Posterior cingulate gyrus (tissue), 11 donors: ENCODE measurements at regions of chr9 and their contacts with region 1.

Region 1: GRCh38 chr9:96327694-96328352 is 25.8 kb upstream of the HSD17B3 start:
- DNase-seq: peak in 2 of 10 donors; percentile 25 to 45

Region 2: DNA sequence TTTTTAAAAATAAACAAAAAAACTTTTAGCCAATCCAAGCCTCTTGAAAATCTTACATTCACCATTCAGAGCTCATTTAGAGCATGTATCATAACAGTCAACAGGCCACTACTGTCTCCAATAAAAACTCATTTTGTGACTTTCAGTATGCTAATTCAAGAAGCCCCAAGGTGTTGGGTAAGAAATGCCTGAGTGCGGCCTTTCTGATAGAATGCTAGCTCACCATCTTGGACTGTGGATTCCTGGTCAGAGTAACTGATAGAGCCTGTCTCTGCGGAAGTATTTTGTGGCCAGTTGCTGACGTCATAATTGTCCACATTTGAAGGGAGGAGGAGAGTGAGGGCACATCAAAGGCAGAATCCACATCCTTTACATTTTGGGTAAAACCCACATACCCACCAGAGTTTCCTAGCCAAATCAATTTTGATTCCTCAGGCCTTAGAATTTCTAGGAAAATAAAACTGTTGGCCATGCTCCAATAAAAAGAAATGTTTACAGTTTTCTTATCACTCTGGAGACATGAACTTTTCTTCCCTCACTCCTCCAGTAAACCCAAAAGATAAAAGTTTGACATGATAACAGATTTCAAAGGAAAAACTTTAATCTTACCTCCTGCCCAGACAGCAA is 493.4 kb before region 1 on chr9:
- intact Hi-C with region 1: no loop called
- DNase-seq: no peak

Region 3: GRCh38 chr9:96418074-96418809 is 90.4 kb after region 1 on chr9 and contains the start of gene ZNF367:
- intact Hi-C with region 1: loop called (anchors 2 kb)
- DNase-seq: peak; percentile 91 to 99 (median 96)

Region 4: DNA sequence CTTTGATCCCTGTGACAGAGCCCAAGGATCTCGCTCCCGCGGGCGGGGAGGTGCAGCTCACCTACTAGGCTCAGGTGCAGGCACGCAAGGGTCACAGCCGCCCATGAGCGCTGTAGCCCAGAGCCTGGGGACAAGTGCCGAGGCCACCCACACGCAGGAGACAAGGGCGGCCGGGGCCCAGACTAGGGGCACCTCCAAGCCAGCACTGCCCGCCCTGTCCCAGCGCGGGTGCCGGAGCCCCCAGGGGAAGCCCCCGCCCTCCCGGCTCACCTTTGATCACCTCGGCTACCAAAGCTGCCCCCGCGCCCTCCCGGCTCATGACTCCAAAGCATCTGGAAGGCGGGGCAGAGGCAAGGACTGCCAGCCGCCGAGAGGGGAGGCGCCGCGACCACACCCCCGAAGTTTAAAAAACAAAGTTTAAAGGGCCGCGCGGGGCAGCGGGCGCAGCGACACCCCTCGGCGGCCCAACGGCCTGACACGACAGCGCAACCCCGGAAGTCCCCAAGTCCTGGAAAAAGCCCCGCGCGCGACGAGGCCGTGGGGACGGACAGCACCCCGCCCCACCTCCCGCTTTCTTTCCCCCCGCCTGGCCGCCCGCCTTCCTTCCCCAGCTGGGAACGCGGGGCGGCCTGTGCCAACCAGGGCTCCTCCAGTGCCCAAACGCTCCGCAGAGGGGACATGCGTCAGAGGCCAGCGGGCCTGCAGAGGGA is 238.8 kb after region 1 on chr9:
- intact Hi-C with region 1: loop called (anchors 5 kb)
- DNase-seq: peak; percentile 63 to 97 (median 78)

Region 5: GRCh38 chr9:96667361-96667728 is 339.5 kb after region 1 on chr9:
- intact Hi-C with region 1: loop called (anchors 5 kb)
- DNase-seq: no peak